Caco-2 (cell line): ENCODE measurements at regions of chr2 and their contacts with region 1.

Region 1: DNA sequence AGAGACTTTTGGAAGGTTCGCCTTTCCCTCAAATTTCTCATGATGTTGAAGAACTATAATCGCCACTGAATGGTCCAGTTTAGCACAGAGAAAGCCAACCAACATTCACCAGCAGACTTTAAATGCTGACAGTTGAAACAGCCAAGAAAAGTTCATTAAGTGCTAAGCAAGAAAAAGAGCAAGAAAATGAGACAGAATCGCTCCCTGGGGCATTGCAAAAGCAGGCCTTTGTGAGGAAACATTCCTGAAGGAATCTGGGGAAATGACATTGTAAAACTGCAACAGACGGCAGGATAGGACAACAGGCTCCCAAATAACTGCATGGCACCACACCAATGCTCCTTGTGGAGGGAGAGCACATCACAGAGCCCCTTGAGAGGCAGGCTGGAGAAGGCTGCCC is 269.3 kb upstream of the ID2 start:
- DNase-seq: peak in 1 of 2 experiments; percentile 23
- H3K4me3 ChIP-seq: no peak overlapping the region
- H3K4me3 Mint-ChIP-seq: peak overlapping the region; percentile 30
- H3K27ac Mint-ChIP-seq: peak overlapping the region; percentile 79
- H3K4me1 ChIP-seq: peaks cover 37% of the 10 kb centered on the region
- H3K4me1 Mint-ChIP-seq: peaks cover 27% of the 10 kb centered on the region
- H3K27me3 ChIP-seq: no peaks in the 10 kb centered on the region
- H3K27me3 Mint-ChIP-seq: no peaks in the 10 kb centered on the region
- CTCF ChIP-seq: no peak

Region 2: GRCh38 chr2:8103083-8103708 is 309.4 kb before region 1 on chr2:
- CTCF ChIA-PET with region 1: no interaction called
- POLR2A ChIA-PET with region 1: no interaction called
- intact Hi-C with region 1: loop called (anchors 1 kb)
- DNase-seq: peak; percentile 66 to 75
- H3K4me3 ChIP-seq: no peak overlapping the region
- H3K4me3 Mint-ChIP-seq: no peak overlapping the region
- H3K27ac Mint-ChIP-seq: no peak overlapping the region
- H3K4me1 ChIP-seq: peaks cover 27% of the 10 kb centered on the region
- H3K4me1 Mint-ChIP-seq: peaks cover 24% of the 10 kb centered on the region
- H3K27me3 ChIP-seq: no peaks in the 10 kb centered on the region
- H3K27me3 Mint-ChIP-seq: no peaks in the 10 kb centered on the region
- CTCF ChIP-seq: no peak

Region 3: DNA sequence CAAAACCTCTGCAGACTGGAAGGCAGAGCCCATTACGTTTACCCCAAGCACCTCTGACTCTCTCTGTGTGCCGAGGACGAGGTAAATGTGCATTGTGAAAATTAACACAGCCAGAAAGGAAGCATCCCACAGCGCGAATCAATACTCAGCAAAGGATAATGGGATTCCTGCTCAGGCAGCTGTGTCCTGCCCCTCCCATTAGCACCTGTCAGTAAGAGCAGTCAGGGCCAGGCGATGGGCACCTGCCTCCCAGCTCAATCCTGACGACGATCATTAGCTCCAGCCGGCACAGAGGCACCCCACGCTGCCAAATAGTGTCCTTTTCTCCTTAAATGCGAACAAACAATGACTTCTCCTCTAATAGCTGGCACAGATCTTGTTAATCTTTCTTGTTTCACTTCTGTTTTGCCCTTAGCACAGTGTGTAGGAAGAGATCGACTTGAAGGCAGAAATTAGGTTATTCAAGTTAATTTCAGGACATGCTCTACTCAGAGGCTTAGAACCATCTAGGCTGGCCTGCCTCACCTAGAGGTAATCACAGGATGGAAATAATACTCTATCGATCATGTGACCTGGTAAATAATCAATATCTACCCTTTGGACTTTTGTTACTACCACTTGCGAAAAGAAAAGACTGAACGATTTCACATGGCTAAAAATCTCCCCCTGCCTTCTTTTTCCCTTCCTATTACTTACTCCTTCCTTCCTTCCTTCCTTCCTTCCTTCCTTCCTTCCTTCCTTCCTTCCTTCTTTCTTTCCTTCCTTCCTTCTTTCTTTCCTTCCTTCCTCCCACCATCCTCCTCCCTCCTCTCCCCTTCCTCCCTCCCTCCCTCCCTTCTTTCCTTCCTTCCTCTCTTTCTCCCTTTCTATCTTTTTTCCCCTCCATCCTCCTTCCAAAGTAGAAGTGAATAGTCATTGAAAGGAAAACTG is 218.6 kb before region 1 on chr2:
- CTCF ChIA-PET with region 1: no interaction called
- POLR2A ChIA-PET with region 1: no interaction called
- intact Hi-C with region 1: loop called (anchors 5 kb)
- DNase-seq: no peak
- H3K4me3 ChIP-seq: no peak overlapping the region
- H3K4me3 Mint-ChIP-seq: no peak overlapping the region
- H3K27ac Mint-ChIP-seq: no peak overlapping the region
- H3K4me1 ChIP-seq: peaks cover 8% of the 10 kb centered on the region; the same call in 1 of the 2 replicates
- H3K4me1 Mint-ChIP-seq: peaks cover 20% of the 10 kb centered on the region
- H3K27me3 ChIP-seq: peaks cover 4% of the 10 kb centered on the region; the same call in 1 of the 2 replicates
- H3K27me3 Mint-ChIP-seq: peaks cover 9% of the 10 kb centered on the region
- CTCF ChIP-seq: no peak

Region 4: DNA sequence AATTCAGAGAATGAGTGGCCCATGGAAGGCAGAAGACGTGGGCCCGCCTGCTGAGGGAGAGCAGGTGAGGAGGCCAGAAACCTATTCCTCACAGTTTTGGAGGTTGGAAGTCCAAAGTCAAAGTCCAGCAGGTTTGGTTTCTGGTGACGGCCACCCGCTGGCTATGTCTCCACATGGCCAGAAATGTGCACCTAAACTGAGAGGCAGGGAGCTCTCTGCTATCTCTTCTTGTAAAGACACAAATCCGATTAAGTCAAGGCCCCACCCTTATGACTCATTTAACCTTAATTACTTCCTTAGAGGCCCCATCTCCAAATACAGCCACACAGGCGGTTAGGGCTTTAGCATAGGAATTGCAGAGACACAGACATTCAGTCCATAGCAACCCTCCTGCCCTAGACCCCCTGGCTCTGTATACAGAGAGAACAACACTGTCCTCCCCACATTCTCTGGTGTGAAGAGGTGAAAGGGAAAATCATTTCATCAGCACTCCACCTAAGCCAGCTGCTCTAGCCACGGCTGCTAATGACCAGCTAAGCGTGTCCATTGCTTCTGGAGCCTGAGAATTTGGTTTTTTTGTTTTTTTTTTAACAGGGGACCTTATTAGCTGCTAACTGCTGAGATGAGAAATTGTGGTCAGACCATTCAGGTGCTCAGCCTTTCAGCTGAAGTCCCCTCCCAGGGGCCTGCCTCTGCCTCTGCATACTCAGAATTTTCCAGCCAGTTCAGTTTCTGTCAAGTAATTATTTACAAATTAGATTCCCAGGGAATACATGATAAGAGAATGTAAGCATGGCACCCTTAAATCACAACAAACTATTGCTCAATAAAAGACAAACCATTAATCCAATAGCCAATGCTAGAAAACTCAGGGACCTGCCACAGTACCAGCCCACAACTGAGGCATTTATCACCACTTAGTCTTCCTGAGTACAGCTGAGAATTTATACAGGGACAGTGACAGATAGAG is 99.4 kb before region 1 on chr2:
- CTCF ChIA-PET with region 1: no interaction called
- POLR2A ChIA-PET with region 1: no interaction called
- intact Hi-C with region 1: loop called (anchors 5 kb)
- DNase-seq: peak in 1 of 2 experiments; percentile 9
- H3K4me3 ChIP-seq: no peak overlapping the region
- H3K4me3 Mint-ChIP-seq: no peak overlapping the region
- H3K27ac Mint-ChIP-seq: no peak overlapping the region
- H3K4me1 ChIP-seq: peaks cover 12% of the 10 kb centered on the region
- H3K4me1 Mint-ChIP-seq: no peaks in the 10 kb centered on the region
- H3K27me3 ChIP-seq: no peaks in the 10 kb centered on the region
- H3K27me3 Mint-ChIP-seq: peaks cover 4% of the 10 kb centered on the region
- CTCF ChIP-seq: no peak

Region 5: GRCh38 chr2:8424997-8425900 is 12.7 kb after region 1 on chr2:
- CTCF ChIA-PET with region 1: no interaction called
- POLR2A ChIA-PET with region 1: no interaction called
- intact Hi-C with region 1: no loop called
- DNase-seq: no peak
- H3K4me3 ChIP-seq: no peak overlapping the region
- H3K4me3 Mint-ChIP-seq: no peak overlapping the region
- H3K27ac Mint-ChIP-seq: no peak overlapping the region
- H3K4me1 ChIP-seq: no peaks in the 10 kb centered on the region
- H3K4me1 Mint-ChIP-seq: no peaks in the 10 kb centered on the region
- H3K27me3 ChIP-seq: no peaks in the 10 kb centered on the region
- H3K27me3 Mint-ChIP-seq: no peaks in the 10 kb centered on the region
- CTCF ChIP-seq: no peak

Region 6: GRCh38 chr2:8456151-8456845 is 43.7 kb after region 1 on chr2:
- CTCF ChIA-PET with region 1: no interaction called
- POLR2A ChIA-PET with region 1: no interaction called
- intact Hi-C with region 1: loop called (anchors 5 kb)
- DNase-seq: no peak
- H3K4me3 ChIP-seq: no peak overlapping the region; the same call in 1 of the 2 replicates
- H3K4me3 Mint-ChIP-seq: peak overlapping the region; percentile 52
- H3K27ac Mint-ChIP-seq: no peak overlapping the region
- H3K4me1 ChIP-seq: peaks cover 19% of the 10 kb centered on the region
- H3K4me1 Mint-ChIP-seq: peaks cover 22% of the 10 kb centered on the region
- H3K27me3 ChIP-seq: no peaks in the 10 kb centered on the region; the same call in 1 of the 2 replicates
- H3K27me3 Mint-ChIP-seq: no peaks in the 10 kb centered on the region
- CTCF ChIP-seq: no peak

Region 7: GRCh38 chr2:8472545-8473323 is 60.1 kb after region 1 on chr2:
- CTCF ChIA-PET with region 1: no interaction called
- POLR2A ChIA-PET with region 1: no interaction called
- intact Hi-C with region 1: no loop called
- DNase-seq: no peak
- H3K4me3 ChIP-seq: no peak overlapping the region
- H3K4me3 Mint-ChIP-seq: no peak overlapping the region
- H3K27ac Mint-ChIP-seq: no peak overlapping the region
- H3K4me1 ChIP-seq: peaks cover 16% of the 10 kb centered on the region
- H3K4me1 Mint-ChIP-seq: peaks cover 18% of the 10 kb centered on the region
- H3K27me3 ChIP-seq: no peaks in the 10 kb centered on the region
- H3K27me3 Mint-ChIP-seq: no peaks in the 10 kb centered on the region
- CTCF ChIP-seq: no peak

Region 8: DNA sequence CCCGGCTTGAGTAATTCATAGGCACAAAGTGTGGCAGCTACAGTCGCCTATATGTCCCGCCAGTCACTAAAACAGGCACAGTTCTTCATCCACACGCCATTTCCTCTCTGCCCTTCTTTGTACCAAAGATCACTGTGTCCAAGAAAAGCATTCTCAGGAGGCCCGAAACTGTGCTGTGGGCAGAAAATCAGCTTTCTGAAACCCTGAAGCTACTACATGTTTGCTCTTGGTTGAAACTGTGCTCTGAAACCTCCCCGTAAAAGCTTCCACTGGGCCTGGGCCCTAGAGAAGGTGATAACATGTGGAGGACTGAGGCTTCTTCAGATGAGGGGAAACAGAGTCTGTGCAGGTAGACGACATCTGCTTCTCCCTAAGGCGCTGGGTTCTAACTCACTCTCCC is 193.6 kb after region 1 on chr2:
- CTCF ChIA-PET with region 1: no interaction called
- POLR2A ChIA-PET with region 1: no interaction called
- intact Hi-C with region 1: loop called (anchors 1 kb)
- DNase-seq: peak in 1 of 2 experiments; percentile 8
- H3K4me3 ChIP-seq: no peak overlapping the region
- H3K4me3 Mint-ChIP-seq: no peak overlapping the region
- H3K27ac Mint-ChIP-seq: peak overlapping the region; percentile 69
- H3K4me1 ChIP-seq: peaks cover 86% of the 10 kb centered on the region
- H3K4me1 Mint-ChIP-seq: peaks cover 69% of the 10 kb centered on the region
- H3K27me3 ChIP-seq: no peaks in the 10 kb centered on the region
- H3K27me3 Mint-ChIP-seq: no peaks in the 10 kb centered on the region
- CTCF ChIP-seq: no peak